ENCODE measurements at regions of chr11 and their contacts with region 1.

Region 1: GRCh38 chr11:78188286-78189173 is at the starts of genes KCTD21 and USP35:
- DNase-seq: peak; percentile 83 to 94 (median 87)
- ATAC-seq: peak; percentile 94
- H3K4me3 ChIP-seq: peak within 1 kb of the TSS; percentile 96
- H3K4me3 Mint-ChIP-seq: peak within 1 kb of the TSS; percentile 90 to 100 (median 98)
- H3K27ac ChIP-seq: peak within 1 kb of the TSS; percentile 85
- H3K27ac Mint-ChIP-seq: peak within 1 kb of the TSS; percentile 87 to 99 (median 97)
- H3K4me1 ChIP-seq: peaks cover 15 to 49% of the 10 kb centered on the region in 2 donors
- H3K4me1 Mint-ChIP-seq: peaks cover 37 to 59% (median 56%) of the 10 kb centered on the region in 7 donors
- H3K27me3 ChIP-seq: no peaks in the 10 kb centered on the region
- H3K27me3 Mint-ChIP-seq: no peaks in the 10 kb centered on the region
- total RNA-seq, gene KCTD21: 3.5 to 12.2 (median 6.5) TPM
- total RNA-seq, gene USP35: 11.3 to 19.2 (median 15.2) TPM

Region 2: GRCh38 chr11:76380967-76381719 is 1807.4 kb before region 1 on chr11 and contains the starts of genes GVQW3 and THAP12:
- CTCF ChIA-PET with region 1: no interaction called
- POLR2A ChIA-PET with region 1: no interaction called
- intact Hi-C with region 1: loop called in 1 of 2 experiments (anchors 10 kb)
- DNase-seq: peak; percentile 96 to 99 (median 98)
- ATAC-seq: peak; percentile 96
- H3K4me3 ChIP-seq: peak within 1 kb of the TSS; percentile 86
- H3K4me3 Mint-ChIP-seq: peak within 1 kb of the TSS; percentile 92 to 98 (median 97)
- H3K27ac ChIP-seq: peak within 1 kb of the TSS; percentile 72
- H3K27ac Mint-ChIP-seq: peak within 1 kb of the TSS; percentile 75 to 98 (median 92)
- H3K4me1 ChIP-seq: peaks cover 22 to 43% of the 10 kb centered on the region in 2 donors
- H3K4me1 Mint-ChIP-seq: peaks cover 51 to 76% (median 69%) of the 10 kb centered on the region in 7 donors
- H3K27me3 ChIP-seq: no peaks in the 10 kb centered on the region
- H3K27me3 Mint-ChIP-seq: no peaks in the 10 kb centered on the region
- total RNA-seq, gene GVQW3: 3.6 to 9.1 (median 6.7) TPM
- total RNA-seq, gene THAP12: 40.3 to 57.9 (median 51.1) TPM

Region 3: GRCh38 chr11:77637345-77638165 is 551.0 kb before region 1 on chr11 and contains the start of gene CLNS1A:
- CTCF ChIA-PET with region 1: no interaction called
- POLR2A ChIA-PET with region 1: no interaction called
- intact Hi-C with region 1: loop called in 1 of 2 experiments (anchors 1 kb)
- DNase-seq: peak; percentile 53 to 79 (median 75)
- ATAC-seq: peak; percentile 99
- H3K4me3 ChIP-seq: peak within 1 kb of the TSS; percentile 77
- H3K4me3 Mint-ChIP-seq: peak within 1 kb of the TSS; percentile 91 to 97 (median 96)
- H3K27ac ChIP-seq: peak within 1 kb of the TSS; percentile 87
- H3K27ac Mint-ChIP-seq: peak within 1 kb of the TSS; percentile 86 to 98 (median 95)
- H3K4me1 ChIP-seq: peaks cover 7 to 19% of the 10 kb centered on the region in 2 donors
- H3K4me1 Mint-ChIP-seq: peaks cover 34 to 49% (median 44%) of the 10 kb centered on the region in 7 donors
- H3K27me3 ChIP-seq: no peaks in the 10 kb centered on the region
- H3K27me3 Mint-ChIP-seq: no peaks in the 10 kb centered on the region
- total RNA-seq, gene CLNS1A: 82.2 to 149 (median 113) TPM

Region 4: DNA sequence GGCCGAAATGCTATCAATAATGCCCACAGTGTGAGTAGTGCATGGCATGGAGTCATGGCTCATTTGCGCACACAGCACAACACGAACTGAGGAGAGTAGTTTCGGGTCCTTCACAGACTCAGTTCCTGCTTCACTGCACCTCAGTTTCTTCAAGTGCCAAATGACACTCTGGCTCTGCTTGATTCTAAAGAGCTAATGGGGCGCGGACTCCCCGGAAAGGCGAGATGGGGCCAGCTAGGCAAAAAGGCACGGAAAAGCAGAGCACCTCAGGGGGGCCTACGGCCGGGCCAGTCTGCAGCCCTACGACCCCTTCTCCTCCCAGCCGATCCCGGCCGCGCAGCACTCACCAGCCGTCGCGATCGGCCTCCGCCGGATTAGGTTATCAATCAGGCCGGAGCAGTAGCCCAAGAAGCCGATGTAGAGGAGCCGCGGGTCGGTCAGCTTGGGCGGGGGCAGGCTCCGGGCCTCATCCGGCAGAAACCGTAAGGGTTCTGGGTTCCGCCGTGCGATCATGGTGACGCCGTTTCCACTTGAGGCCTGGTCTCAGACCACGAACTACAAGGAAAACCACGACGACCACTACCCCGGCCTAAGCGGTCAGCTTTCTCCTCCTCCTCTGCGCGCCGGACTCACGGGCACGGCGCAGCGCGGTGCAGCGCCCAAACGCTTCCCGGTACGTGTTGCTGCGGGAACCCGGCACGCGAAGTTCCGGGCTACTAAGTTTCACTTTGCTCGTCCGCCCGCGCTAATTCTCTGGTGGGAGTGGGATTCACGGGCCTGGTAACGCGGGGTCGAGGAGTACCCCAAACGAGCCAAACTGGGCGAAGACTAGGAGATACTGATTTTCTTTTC is 109.1 kb before region 1 on chr11 and contains the start of gene NDUFC2:
- CTCF ChIA-PET with region 1: no interaction called
- POLR2A ChIA-PET with region 1: no interaction called
- intact Hi-C with region 1: loop called (anchors 1 to 5 kb)
- DNase-seq: peak; percentile 37 to 73 (median 61)
- ATAC-seq: peak; percentile 90
- H3K4me3 ChIP-seq: peak within 1 kb of the TSS; percentile 99
- H3K4me3 Mint-ChIP-seq: peak within 1 kb of the TSS; percentile 92 to 98 (median 95)
- H3K27ac ChIP-seq: peak within 1 kb of the TSS; percentile 83
- H3K27ac Mint-ChIP-seq: peak within 1 kb of the TSS; percentile 90 to 97 (median 95)
- H3K4me1 ChIP-seq: peaks cover 38 to 43% of the 10 kb centered on the region in 2 donors
- H3K4me1 Mint-ChIP-seq: peaks cover 41 to 68% (median 53%) of the 10 kb centered on the region in 7 donors
- H3K27me3 ChIP-seq: no peaks in the 10 kb centered on the region
- H3K27me3 Mint-ChIP-seq: no peaks in the 10 kb centered on the region
- total RNA-seq, gene NDUFC2: 43.4 to 189 (median 64.7) TPM

Region 5: DNA sequence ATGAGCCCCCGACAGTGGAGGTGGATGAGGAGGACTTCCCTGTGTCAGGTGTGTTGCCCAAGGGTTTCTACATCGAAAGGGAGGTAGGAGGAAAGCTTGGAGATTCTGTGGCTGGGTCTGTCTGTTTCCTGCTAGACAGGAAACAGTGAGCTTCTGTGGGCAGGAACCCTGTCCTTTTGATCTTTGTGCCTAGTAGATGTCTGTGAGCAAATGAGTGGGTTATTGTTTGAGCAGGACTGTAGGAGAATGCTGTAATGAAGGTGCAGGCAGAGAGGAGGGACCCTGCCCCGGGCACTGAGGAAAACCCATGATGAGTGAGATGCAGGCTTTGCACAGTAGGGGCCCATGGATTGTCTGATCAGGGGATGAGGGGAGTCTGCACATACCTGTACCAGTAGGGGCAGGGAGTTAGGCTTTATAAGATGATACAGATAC is 14.2 kb after region 1 on chr11:
- CTCF ChIA-PET with region 1: interaction called, 9 read pairs
- POLR2A ChIA-PET with region 1: interaction called, 78 read pairs
- intact Hi-C with region 1: loop called (anchors 1 kb)
- DNase-seq: peak; percentile 43 to 92 (median 84)
- ATAC-seq: peak; percentile 86
- H3K4me3 ChIP-seq: peak overlapping the region; percentile 53
- H3K4me3 Mint-ChIP-seq: peak overlapping the region; percentile 79 to 91 (median 87)
- H3K27ac ChIP-seq: peak overlapping the region; percentile 91
- H3K27ac Mint-ChIP-seq: peak overlapping the region; percentile 93 to 100 (median 97)
- H3K4me1 ChIP-seq: peaks cover 19 to 36% of the 10 kb centered on the region in 2 donors
- H3K4me1 Mint-ChIP-seq: peaks cover 25 to 65% (median 55%) of the 10 kb centered on the region in 7 donors
- H3K27me3 ChIP-seq: no peaks in the 10 kb centered on the region
- H3K27me3 Mint-ChIP-seq: no peaks in the 10 kb centered on the region

Region 6: DNA sequence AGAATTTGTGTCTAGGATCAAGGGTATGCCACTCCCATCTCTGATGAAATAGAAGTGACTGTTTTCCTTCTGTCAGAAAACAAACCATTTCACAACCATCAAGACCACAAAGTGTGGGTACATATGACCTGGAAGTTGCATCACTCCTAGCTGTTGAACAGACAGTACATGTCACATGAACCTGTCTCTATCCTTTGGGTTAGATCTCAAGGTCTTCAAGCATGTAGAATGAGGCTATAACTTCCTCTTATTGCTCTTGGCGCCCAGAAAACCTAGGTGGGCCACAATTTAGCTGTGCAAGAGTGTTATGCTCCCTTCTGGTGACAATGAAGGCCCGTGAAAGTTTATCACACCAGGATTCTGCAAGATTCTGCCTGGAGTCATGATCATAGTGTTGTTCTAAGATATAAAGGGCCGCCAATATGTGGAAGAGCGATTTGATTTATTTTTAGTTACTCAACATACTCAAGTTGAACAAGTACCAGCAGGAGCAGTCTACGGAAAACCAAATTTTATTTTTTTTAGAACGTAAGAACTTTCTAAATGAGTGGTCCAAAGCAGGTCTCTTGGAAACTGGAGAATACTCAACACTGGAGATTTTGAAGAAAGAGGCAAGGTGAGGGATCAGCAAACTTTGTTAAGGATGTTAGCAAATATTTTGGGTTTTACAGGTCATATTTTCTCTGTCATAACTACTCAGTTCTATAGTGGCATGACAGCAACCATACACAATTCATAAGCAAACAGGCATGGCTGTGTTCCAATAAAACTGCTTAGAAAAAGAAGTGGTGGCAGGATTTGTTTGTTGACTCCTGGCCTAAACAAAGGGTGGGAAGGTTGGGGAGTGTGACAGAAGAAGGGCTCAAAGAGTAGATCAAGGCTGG is 102.0 kb after region 1 on chr11:
- CTCF ChIA-PET with region 1: no interaction called
- POLR2A ChIA-PET with region 1: no interaction called
- intact Hi-C with region 1: loop called in 1 of 2 experiments (anchors 5 kb)
- DNase-seq: peak in 2 of 9 donors; percentile 28 to 30
- ATAC-seq: peak; percentile 80
- H3K4me3 ChIP-seq: no peak overlapping the region
- H3K4me3 Mint-ChIP-seq: peak overlapping the region in 4 of 10 donors; percentile 2 to 68 (median 35)
- H3K27ac ChIP-seq: no peak overlapping the region
- H3K27ac Mint-ChIP-seq: peak overlapping the region in 4 of 9 donors; percentile 15 to 95 (median 32)
- H3K4me1 ChIP-seq: peaks cover 0 to 5% of the 10 kb centered on the region in 2 donors
- H3K4me1 Mint-ChIP-seq: peaks cover 18 to 58% (median 32%) of the 10 kb centered on the region in 7 donors
- H3K27me3 ChIP-seq: no peaks in the 10 kb centered on the region
- H3K27me3 Mint-ChIP-seq: no peaks in the 10 kb centered on the region

Region 7: DNA sequence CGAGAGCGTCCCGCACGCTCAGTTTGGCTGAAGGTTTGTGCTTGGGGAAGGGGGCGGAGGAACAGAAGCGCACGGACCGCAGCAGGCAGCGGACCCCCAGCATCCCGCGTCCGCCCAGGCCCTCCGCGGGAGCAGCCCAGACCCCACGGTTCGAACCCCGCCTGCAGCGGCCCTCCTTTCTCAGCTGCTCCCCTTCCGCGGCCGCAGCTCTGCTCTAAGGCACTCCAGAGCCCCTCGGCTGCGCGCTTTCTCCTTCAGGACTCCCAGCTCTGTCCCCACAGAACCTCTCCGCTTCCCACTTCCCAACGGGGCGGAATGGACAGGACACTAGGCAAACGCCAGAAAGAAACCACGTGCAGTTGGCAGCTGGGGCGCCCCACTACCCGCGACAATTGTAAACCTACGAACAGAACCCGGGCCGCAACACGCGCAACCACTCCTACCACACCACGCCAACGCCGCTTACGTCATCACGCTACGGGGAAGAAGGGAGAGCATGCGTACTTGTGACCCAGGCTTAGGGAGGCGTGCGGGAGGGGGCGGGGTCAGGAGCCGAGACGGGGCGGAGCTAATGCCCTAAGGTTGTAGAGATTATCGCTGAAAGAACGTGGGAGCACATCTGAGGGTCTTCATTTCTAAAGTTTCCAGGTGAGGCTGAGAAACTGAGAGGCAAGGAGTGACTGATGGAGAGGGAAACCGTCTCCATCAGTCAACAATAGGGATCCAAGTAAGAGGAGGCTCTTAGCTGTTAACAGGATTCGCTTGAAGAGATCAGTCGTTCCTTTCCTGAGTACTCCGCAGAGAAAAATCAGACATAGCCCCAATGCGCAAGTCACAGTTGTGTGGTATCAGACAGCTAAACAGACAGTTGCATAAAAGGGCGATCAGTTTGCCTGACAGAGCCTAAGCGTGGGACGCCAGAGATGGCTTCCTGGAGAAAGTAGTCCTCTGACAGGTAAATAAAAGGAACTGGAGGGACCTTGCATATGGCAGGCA is 386.2 kb after region 1 on chr11 and contains the start of gene NARS2:
- CTCF ChIA-PET with region 1: no interaction called
- POLR2A ChIA-PET with region 1: no interaction called
- intact Hi-C with region 1: loop called (anchors 1 kb)
- DNase-seq: peak; percentile 89 to 97 (median 96)
- ATAC-seq: peak; percentile 99
- H3K4me3 ChIP-seq: peak within 1 kb of the TSS; percentile 70
- H3K4me3 Mint-ChIP-seq: peak within 1 kb of the TSS; percentile 93 to 100 (median 98)
- H3K27ac ChIP-seq: peak within 1 kb of the TSS; percentile 96
- H3K27ac Mint-ChIP-seq: peak within 1 kb of the TSS; percentile 86 to 99 (median 98)
- H3K4me1 ChIP-seq: peaks cover 7 to 21% of the 10 kb centered on the region in 2 donors
- H3K4me1 Mint-ChIP-seq: peaks cover 24 to 63% (median 50%) of the 10 kb centered on the region in 7 donors
- H3K27me3 ChIP-seq: no peaks in the 10 kb centered on the region
- H3K27me3 Mint-ChIP-seq: peaks cover 0 to 5% (median 0%) of the 10 kb centered on the region in 5 donors
- total RNA-seq, gene NARS2: 9.3 to 21.5 (median 19.7) TPM